Lower leg skin (tissue), 4 donors: ENCODE measurements at regions of chr10 and their contacts with region 1.

Region 1: GRCh38 chr10:123559066-123559822 is 106.9 kb upstream of the GPR26 start:
- DNase-seq: peak; percentile 46 to 93
- H3K4me3 ChIP-seq: no peak overlapping the region
- CTCF ChIP-seq: peak in 1 of 3 donors; percentile 86
- POLR2A ChIP-seq: no peak

Region 2: DNA sequence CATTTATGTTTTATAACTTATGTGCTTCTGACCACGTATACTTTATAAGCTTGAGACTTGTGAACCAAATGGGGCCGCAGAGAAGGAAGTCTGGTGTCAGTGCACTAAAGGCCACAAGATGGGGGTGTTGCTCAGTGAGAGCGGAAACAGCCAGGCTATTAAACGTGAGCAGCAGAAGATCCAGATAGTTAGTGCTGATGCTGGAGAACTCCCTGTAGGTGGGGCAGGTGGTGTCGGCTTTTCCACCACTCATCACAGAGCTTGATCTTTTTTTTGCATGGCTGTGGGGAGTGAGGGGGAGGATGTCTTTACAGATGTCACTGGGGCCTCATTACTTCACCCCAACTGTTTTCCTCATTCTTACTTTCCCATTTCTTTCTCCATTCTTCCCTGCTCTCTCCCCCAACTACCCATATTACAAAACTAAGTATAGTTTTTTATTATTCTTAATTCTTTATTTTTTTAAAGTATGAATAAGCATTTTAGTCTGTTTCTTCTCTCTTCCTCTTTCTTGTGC is 515.8 kb before region 1 on chr10:
- intact Hi-C with region 1: loop called (anchors 10 kb)
- DNase-seq: peak in 1 of 2 donors; percentile 19
- H3K4me3 ChIP-seq: no peak overlapping the region
- CTCF ChIP-seq: no peak
- POLR2A ChIP-seq: no peak

Region 3: GRCh38 chr10:123655751-123656150 is 96.5 kb after region 1 on chr10:
- intact Hi-C with region 1: no loop called
- DNase-seq: peak in 1 of 2 donors; percentile 49
- H3K4me3 ChIP-seq: no peak overlapping the region
- CTCF ChIP-seq: no peak
- POLR2A ChIP-seq: no peak